IMR-90 (cell line): ENCODE measurements at regions of chr7 and their contacts with region 1.

Region 1: DNA sequence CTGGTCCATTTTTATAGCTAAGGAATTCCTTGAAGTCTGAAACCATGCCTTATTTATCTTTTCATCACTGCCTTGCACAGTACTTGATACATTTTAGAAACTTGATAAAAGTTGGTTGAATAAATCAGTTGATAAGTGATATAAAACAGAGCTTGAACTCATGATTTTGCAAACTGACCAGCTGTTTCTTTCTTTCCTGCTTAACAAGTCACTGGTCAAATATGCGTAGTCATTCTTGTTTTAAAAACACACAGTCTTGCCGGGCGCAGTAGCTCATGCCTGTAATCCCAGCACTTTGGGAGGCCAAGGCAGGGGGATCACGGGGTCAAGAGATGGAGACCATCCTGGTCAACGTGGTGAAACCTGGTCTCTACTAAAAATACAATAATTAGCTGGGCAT is 6.3 kb downstream of the TPST1 start:
- DNase-seq: peak; percentile 87
- ATAC-seq: peak; percentile 79
- H3K4me3 ChIP-seq: no peak overlapping the region
- H3K27ac ChIP-seq: peak overlapping the region; percentile 51; the same call in 1 of the 2 replicates
- H3K4me1 ChIP-seq: peaks cover 5% of the 10 kb centered on the region; the same call in 1 of the 2 replicates
- H3K27me3 ChIP-seq: no peaks in the 10 kb centered on the region
- CTCF ChIP-seq: no peak
- POLR2A ChIP-seq: no peak
- RAD21 ChIP-seq: no peak

Region 2: GRCh38 chr7:66247378-66248078 is 36.1 kb after region 1 on chr7:
- CTCF ChIA-PET with region 1: no interaction called
- POLR2A ChIA-PET with region 1: no interaction called
- dilution Hi-C with region 1: no loop called
- in situ Hi-C with region 1: no loop called
- intact Hi-C with region 1: loop called (anchors 5 kb)
- DNase-seq: no peak
- ATAC-seq: no peak
- H3K4me3 ChIP-seq: no peak overlapping the region
- H3K27ac ChIP-seq: no peak overlapping the region
- H3K4me1 ChIP-seq: no peaks in the 10 kb centered on the region
- H3K27me3 ChIP-seq: no peaks in the 10 kb centered on the region
- CTCF ChIP-seq: no peak
- POLR2A ChIP-seq: no peak
- RAD21 ChIP-seq: no peak